ENCODE measurements at regions of chr7 and their contacts with region 1.

Region 1: DNA sequence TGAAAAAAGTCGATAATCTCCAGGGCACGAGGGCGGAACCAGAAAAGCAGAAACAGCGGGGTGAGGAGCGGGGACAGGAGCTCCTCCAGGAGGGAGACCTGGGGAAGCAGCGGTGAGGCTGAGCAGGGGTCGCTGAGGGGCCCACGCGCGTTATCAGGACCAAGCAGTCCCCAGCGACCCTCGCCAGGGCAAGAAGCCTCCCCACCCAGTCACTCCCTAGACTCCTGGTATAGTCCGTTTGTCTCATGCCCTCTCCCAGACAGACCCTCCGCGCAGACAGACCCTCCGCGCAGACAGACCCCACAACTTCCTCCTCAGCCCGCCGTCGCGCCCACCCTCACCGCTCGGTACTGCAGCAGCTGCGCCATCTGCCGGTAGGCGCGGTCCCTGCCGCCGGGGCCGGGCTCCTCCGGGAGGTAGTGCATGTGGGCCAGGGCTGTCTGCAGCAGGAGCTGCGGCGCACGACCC is 6.3 kb downstream of the ATG9B start:
- DNase-seq: peak; percentile 73
- H3K4me3 Mint-ChIP-seq: peak overlapping the region; percentile 82
- H3K27ac Mint-ChIP-seq: peak overlapping the region; percentile 81
- H3K4me1 Mint-ChIP-seq: peaks cover 39% of the 10 kb centered on the region
- H3K27me3 Mint-ChIP-seq: peaks cover 19% of the 10 kb centered on the region

Region 2: DNA sequence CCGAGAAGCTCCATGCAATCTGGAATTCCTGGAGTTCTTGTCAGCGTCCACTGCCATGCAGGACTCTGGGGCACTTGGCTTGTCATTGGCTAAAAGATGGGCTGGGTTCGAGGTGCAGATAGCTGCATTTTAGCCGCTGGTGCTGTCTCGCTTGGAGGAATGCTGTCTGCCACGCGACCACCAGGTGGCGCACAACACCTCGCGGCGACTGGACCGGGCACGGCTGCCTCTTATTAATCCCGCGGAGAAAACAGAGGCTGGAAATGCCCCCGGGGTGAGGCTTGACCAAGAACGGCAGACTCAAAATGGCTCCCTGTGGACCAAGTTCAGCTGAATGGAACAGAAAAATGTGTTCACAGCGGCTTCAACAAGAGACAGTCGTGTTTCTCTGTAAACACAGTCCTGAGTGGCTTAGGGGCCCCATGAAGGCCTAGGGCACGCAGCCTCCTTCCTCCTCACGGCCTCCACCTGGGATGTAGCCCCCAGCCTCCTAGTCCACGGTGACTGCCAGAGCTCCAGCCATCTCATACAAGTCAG is 119.4 kb before region 1 on chr7:
- intact Hi-C with region 1: loop called (anchors 1 kb)
- DNase-seq: peak; percentile 56
- H3K4me3 Mint-ChIP-seq: no peak overlapping the region
- H3K27ac Mint-ChIP-seq: no peak overlapping the region
- H3K4me1 Mint-ChIP-seq: peaks cover 6% of the 10 kb centered on the region
- H3K27me3 Mint-ChIP-seq: peaks cover 33% of the 10 kb centered on the region

Region 3: GRCh38 chr7:150974468-150975391 is 43.3 kb before region 1 on chr7:
- intact Hi-C with region 1: loop called (anchors 5 kb)
- DNase-seq: peak; percentile 73
- H3K4me3 Mint-ChIP-seq: peak overlapping the region; percentile 83
- H3K27ac Mint-ChIP-seq: peak overlapping the region; percentile 58
- H3K4me1 Mint-ChIP-seq: peaks cover 29% of the 10 kb centered on the region
- H3K27me3 Mint-ChIP-seq: peaks cover 25% of the 10 kb centered on the region

Region 4: GRCh38 chr7:151028131-151028947 is 10.4 kb after region 1 on chr7 and contains the start of gene ABCB8:
- intact Hi-C with region 1: loop called (anchors 1 kb)
- DNase-seq: peak; percentile 98
- H3K4me3 Mint-ChIP-seq: peak within 1 kb of the TSS; percentile 94
- H3K27ac Mint-ChIP-seq: peak within 1 kb of the TSS; percentile 95
- H3K4me1 Mint-ChIP-seq: peaks cover 21% of the 10 kb centered on the region
- H3K27me3 Mint-ChIP-seq: peaks cover 2% of the 10 kb centered on the region
- total RNA-seq, gene ABCB8: 56.9 and 57.9 TPM in 2 replicates

Region 5: GRCh38 chr7:151110941-151111645 is 93.1 kb after region 1 on chr7:
- intact Hi-C with region 1: no loop called
- DNase-seq: peak; percentile 55
- H3K4me3 Mint-ChIP-seq: no peak overlapping the region
- H3K27ac Mint-ChIP-seq: no peak overlapping the region
- H3K4me1 Mint-ChIP-seq: no peaks in the 10 kb centered on the region
- H3K27me3 Mint-ChIP-seq: peaks cover 17% of the 10 kb centered on the region

Region 6: GRCh38 chr7:151172273-151173141 is 154.5 kb after region 1 on chr7:
- intact Hi-C with region 1: loop called (anchors 5 kb)
- DNase-seq: peak; percentile 74
- H3K4me3 Mint-ChIP-seq: no peak overlapping the region
- H3K27ac Mint-ChIP-seq: no peak overlapping the region
- H3K4me1 Mint-ChIP-seq: peaks cover 8% of the 10 kb centered on the region
- H3K27me3 Mint-ChIP-seq: peaks cover 48% of the 10 kb centered on the region